ENCODE measurements at regions of chr17 and their contacts with region 1.

Region 1: DNA sequence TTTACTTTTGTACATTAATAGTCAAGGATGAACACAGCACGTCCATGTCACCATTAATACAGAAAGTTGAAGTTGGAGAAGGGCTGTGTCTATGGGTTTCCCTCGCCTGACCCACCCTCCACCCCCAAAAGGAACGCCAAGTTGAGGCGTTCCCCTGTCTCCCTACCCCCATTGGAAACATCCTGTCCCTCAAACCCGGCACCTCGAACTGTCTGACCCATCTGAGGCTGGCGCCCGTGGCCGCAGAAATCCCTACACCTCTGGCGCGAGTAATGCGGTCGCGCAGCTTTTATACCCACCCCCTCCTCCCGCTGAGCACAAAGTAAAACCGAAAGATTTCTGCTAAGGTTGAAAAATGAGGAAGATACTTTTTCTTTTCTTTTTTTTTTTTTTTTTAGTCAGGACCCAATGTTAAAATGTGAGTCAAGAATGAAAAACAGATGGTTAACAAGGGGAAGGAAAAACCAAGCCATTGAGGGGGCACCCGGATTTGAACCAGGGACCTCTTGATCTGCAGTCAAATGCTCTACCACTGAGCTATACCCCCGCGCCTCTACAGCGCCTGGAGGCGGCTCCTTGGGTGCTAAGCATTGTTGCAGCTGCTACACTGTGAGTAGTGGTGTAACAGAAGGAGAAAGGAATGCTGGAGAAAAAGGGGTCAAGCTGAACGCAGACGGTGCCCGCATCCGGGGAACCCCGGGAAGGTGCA is 887 bp upstream of the LASP1 start:
- DNase-seq: peak; percentile 90 to 95
- ATAC-seq: peak; percentile 88
- H3K4me3 ChIP-seq: peak overlapping the region; percentile 61 to 77
- H3K27ac ChIP-seq: peak overlapping the region; percentile 69 to 85
- H3K4me1 ChIP-seq: peaks cover 0 to 5% of the 10 kb centered on the region in 2 donors
- H3K27me3 ChIP-seq: no peaks in the 10 kb centered on the region

Region 2: DNA sequence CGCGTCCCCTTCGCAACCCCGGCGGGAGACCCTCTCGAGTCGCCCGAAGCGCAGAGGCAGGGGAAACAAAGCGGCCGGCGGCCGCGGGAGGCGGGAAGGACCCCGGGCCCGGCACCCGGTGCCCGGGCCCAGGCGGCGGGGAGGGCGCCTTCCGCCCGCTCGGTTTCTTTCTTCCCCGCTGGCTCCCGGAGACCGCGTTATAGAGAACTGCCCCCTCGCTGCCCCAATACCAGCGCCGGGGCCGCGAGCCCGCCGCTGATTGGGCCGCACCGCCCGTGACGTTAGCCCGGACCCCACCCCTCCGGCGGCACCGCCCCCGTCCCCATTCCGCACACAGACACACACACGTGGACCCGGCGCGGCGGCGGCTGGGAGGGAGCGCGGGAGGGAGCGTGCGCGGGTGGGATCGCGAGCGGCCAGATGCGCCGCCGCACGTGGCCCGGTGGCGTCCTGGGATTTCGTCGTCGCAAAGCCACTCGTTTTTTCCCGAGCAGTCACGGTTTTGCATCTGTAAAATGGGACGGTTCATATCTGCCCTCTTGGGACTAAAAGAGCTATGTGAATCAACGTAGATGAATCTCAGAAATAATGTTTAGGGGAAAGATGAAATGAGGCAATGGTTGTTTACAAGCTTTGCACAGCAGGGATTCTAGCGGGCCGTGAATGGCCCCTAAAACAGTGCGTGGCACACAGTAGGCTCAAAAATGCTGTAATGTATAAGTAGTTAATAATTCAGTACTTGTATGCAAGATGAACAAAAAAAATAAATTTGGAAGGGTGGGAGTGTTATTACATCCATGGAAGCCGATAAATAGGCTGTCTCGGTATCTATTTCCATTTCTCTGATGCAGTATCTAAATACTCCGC is 194.0 kb before region 1 on chr17 and contains the start of gene EPOP:
- intact Hi-C with region 1: no loop called
- DNase-seq: peak; percentile 92 to 97
- ATAC-seq: peak; percentile 92
- H3K4me3 ChIP-seq: peak within 1 kb of the TSS; percentile 5 to 61
- H3K27ac ChIP-seq: no peak within 1 kb of the TSS
- H3K4me1 ChIP-seq: no peaks in the 10 kb centered on the region
- H3K27me3 ChIP-seq: no peaks in the 10 kb centered on the region
- total RNA-seq, gene EPOP: 1.3 to 1.5 TPM

Region 3: DNA sequence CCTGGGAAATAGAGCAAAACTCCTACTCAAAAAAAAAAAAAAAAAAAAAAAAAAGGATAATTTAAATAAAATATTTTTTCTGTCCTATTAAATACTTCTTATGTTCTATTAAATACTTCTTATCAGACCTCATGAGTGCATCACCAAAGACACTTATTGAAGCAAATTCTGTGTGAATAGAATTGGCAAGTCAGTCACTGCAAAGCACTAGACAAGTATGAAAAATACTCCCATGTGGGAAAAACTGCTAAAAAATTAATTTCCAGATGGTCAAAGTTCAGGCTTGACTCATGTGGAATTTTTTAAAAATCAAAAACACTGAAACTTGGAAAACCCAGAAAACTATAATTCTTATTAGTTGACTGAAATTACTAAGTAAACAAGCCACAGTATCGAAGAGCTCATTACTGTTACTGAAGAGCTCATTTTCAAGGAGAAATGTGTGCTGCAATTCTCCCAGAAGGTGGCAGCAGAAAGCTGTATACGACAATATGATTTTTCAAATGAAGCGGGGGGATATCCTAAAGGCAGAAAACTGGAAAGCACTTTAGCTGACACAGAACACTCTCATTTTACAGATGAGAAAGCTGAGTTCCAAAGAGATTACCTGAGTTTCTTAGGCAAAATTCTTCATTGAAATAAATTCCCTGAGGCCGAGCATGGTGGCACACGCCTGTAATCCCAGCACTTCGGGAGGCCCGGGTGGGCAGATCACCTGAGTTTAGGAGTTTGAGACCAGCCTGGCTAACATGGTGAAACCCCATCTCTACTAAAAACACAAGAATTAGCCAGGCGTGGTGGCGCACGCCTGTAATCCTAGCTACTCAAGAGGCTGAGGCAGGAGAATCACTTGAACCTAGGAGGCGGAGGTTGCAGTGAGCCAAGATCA is 114.1 kb after region 1 on chr17:
- intact Hi-C with region 1: loop called in 1 of 2 experiments (anchors 5 kb)
- DNase-seq: no peak
- ATAC-seq: peak; percentile 82
- H3K4me3 ChIP-seq: no peak overlapping the region
- H3K27ac ChIP-seq: no peak overlapping the region
- H3K4me1 ChIP-seq: no peaks in the 10 kb centered on the region
- H3K27me3 ChIP-seq: no peaks in the 10 kb centered on the region

Measured in aorta (tissue), 5 donors.